ENCODE measurements at regions of chr11 and their contacts with region 1.

Region 1: DNA sequence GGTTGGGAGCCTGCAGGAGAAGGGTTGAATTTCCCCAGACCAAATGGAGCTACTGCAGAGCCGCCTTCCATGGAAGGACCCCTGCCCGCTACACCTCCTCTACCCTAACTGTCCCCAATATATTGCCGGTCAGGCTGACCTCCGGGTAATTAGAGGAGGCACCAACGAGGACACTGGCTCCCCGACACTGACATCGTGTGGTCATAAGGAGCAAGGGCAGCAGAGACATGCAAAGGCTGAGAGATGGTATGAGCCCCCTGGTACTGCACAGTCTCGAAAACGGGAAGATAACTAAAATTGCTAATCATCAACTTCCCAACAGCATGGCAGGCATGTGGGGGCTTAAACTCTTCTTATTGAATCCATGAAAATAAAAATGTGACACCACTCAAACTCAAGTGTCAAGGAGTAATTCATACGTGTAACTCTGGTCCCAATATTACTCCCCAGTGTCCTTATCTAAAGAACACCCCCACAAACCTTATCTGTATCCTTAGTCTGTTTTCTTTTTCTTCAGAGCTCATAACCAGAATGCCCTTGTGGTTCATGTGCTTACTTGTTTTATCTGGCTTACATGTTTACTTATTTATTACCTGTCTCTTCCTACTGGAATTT is 4.4 kb downstream of the CAVIN3 start:
- DNase-seq: no peak
- ATAC-seq: peak; percentile 31
- H3K4me3 Mint-ChIP-seq: no peak overlapping the region
- H3K27ac Mint-ChIP-seq: no peak overlapping the region
- H3K4me1 Mint-ChIP-seq: no peaks in the 10 kb centered on the region
- H3K27me3 Mint-ChIP-seq: peaks cover 45% of the 10 kb centered on the region
- CTCF ChIP-seq: no peak

Region 2: DNA sequence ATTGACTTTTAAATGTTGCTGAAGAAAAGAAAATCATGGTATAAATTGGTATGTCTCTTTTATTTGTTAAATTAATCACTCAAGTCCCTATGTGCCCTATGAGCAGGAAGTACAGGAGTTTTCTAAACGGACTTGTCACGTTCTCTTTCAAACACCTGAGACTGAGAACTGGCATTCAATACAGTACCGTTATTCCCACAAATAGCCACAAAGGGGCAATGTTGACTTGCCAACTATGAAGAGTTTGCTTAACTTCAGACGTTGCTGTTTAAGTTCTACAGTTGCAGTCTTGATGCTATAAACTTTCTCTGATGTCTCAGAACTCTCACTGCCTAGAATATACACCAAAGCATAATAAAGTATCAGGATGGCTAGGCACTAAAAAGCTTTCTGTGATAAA is 293.0 kb before region 1 on chr11:
- CTCF ChIA-PET with region 1: interaction called, 3 read pairs
- POLR2A ChIA-PET with region 1: no interaction called
- intact Hi-C with region 1: loop called (anchors 1 kb)
- DNase-seq: no peak
- ATAC-seq: no peak
- H3K4me3 Mint-ChIP-seq: no peak overlapping the region
- H3K27ac Mint-ChIP-seq: no peak overlapping the region
- H3K4me1 Mint-ChIP-seq: no peaks in the 10 kb centered on the region
- H3K27me3 Mint-ChIP-seq: peaks cover 17% of the 10 kb centered on the region
- CTCF ChIP-seq: no peak

Region 3: GRCh38 chr11:6333112-6333511 is 17.2 kb after region 1 on chr11:
- CTCF ChIA-PET with region 1: no interaction called
- POLR2A ChIA-PET with region 1: no interaction called
- intact Hi-C with region 1: no loop called
- DNase-seq: no peak
- ATAC-seq: no peak
- H3K4me3 Mint-ChIP-seq: no peak overlapping the region
- H3K27ac Mint-ChIP-seq: no peak overlapping the region
- H3K4me1 Mint-ChIP-seq: no peaks in the 10 kb centered on the region
- H3K27me3 Mint-ChIP-seq: peaks cover 12% of the 10 kb centered on the region
- CTCF ChIP-seq: no peak

Measured in activated B cell treated with CpG ODN at 0.5 μM for 24 hours (primary cell).